ENCODE measurements at regions of chr11 and their contacts with region 1.

Region 1: GRCh38 chr11:79822766-79823165 is 381.9 kb upstream of the TENM4 start:
- DNase-seq: no peak
- ATAC-seq: no peak
- H3K4me3 ChIP-seq: no peak overlapping the region
- H3K4me3 Mint-ChIP-seq: no peak overlapping the region
- H3K27ac ChIP-seq: no peak overlapping the region
- H3K27ac Mint-ChIP-seq: no peak overlapping the region
- H3K4me1 ChIP-seq: no peaks in the 10 kb centered on the region
- H3K4me1 Mint-ChIP-seq: no peaks in the 10 kb centered on the region
- H3K27me3 ChIP-seq: no peaks in the 10 kb centered on the region
- H3K27me3 Mint-ChIP-seq: no peaks in the 10 kb centered on the region
- CTCF ChIP-seq: no peak

Region 2: GRCh38 chr11:79762279-79762921 is 60.4 kb before region 1 on chr11:
- CTCF ChIA-PET with region 1: no interaction called
- POLR2A ChIA-PET with region 1: no interaction called
- intact Hi-C with region 1: loop called in 1 of 2 experiments (anchors 10 kb)
- DNase-seq: no peak
- ATAC-seq: no peak
- H3K4me3 ChIP-seq: no peak overlapping the region
- H3K4me3 Mint-ChIP-seq: no peak overlapping the region
- H3K27ac ChIP-seq: no peak overlapping the region
- H3K27ac Mint-ChIP-seq: no peak overlapping the region
- H3K4me1 ChIP-seq: no peaks in the 10 kb centered on the region
- H3K4me1 Mint-ChIP-seq: no peaks in the 10 kb centered on the region
- H3K27me3 ChIP-seq: no peaks in the 10 kb centered on the region
- H3K27me3 Mint-ChIP-seq: no peaks in the 10 kb centered on the region
- CTCF ChIP-seq: no peak

Region 3: GRCh38 chr11:79783833-79784232 is 38.9 kb before region 1 on chr11:
- CTCF ChIA-PET with region 1: no interaction called
- POLR2A ChIA-PET with region 1: no interaction called
- intact Hi-C with region 1: no loop called
- DNase-seq: no peak
- ATAC-seq: no peak
- H3K4me3 ChIP-seq: no peak overlapping the region
- H3K4me3 Mint-ChIP-seq: no peak overlapping the region
- H3K27ac ChIP-seq: no peak overlapping the region
- H3K27ac Mint-ChIP-seq: no peak overlapping the region
- H3K4me1 ChIP-seq: no peaks in the 10 kb centered on the region
- H3K4me1 Mint-ChIP-seq: no peaks in the 10 kb centered on the region
- H3K27me3 ChIP-seq: no peaks in the 10 kb centered on the region
- H3K27me3 Mint-ChIP-seq: no peaks in the 10 kb centered on the region
- CTCF ChIP-seq: no peak

Region 4: DNA sequence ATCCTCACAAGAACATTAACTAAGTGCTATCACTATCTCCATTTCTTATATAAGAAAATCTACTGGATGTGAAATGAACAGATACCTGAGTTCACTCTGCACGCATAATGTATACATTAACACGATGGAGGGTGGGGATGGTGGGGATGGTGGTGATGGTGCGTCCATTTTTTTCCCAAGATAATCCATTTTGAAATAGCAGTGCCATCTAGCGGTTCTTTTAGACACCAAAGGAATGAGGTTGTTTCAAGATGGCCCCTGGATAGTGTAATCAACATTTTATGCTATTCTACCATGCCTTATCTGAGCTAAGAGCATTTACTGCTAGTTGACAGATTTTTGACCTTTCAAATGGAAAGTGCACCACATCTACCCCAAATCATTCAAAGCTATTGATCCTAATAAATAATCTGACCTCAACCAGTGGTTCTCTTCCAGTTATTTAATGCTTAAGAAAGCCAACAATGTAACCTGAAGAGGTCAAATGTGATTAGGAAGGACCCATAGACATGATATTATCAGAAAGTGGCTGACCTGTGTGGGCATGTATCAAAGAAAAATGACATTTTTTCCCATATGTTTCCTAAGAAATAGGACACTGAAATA is 332.7 kb after region 1 on chr11:
- CTCF ChIA-PET with region 1: no interaction called
- POLR2A ChIA-PET with region 1: no interaction called
- intact Hi-C with region 1: no loop called
- DNase-seq: no peak
- ATAC-seq: no peak
- H3K4me3 ChIP-seq: no peak overlapping the region
- H3K4me3 Mint-ChIP-seq: no peak overlapping the region
- H3K27ac ChIP-seq: no peak overlapping the region
- H3K27ac Mint-ChIP-seq: no peak overlapping the region
- H3K4me1 ChIP-seq: no peaks in the 10 kb centered on the region
- H3K4me1 Mint-ChIP-seq: no peaks in the 10 kb centered on the region
- H3K27me3 ChIP-seq: no peaks in the 10 kb centered on the region
- H3K27me3 Mint-ChIP-seq: no peaks in the 10 kb centered on the region
- CTCF ChIP-seq: no peak